Activated CD4-positive, alpha-beta T cell treated with anti-CD3 and anti-CD28 coated beads for 36 hours (primary cell): ENCODE measurements at regions of chr5 and their contacts with region 1.

Region 1: DNA sequence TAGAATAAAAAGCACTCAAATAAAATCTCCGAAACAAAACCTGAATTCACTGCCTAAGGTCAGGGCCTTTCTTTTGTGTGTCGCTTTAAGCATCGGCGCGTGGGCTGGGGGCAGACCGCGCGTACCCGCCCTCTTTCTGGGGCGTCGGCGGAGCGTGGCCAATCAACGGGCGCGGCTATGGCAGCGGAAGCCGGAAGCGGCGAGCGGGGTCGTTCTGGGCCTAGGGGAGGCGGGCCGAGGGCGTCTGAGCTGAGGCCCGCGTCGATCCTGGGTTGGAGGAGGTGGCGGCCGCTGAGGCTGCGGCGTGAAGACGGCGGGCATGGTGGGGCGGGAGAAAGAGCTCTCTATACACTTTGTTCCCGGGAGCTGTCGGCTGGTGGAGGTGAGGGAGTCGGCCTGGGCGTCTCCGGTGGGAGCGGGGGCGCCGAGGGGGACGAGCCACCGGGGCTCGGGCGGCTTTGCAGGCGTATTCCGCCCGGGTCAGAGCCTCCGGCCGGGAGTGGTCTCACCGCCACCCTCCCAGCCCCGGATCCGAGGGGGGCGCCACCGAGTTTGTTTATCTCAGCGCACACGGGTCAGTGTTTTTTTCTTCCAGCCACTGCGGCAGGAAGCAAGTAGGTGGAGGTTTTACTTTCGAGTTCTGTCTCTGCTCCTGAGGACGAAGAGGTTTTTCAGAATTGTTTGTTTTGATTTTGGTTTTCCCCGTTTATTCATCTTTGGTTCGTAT is at the start of gene MAT2B:
- DNase-seq: peak; percentile 98
- ATAC-seq: peak; percentile 81
- H3K4me3 Mint-ChIP-seq: peak within 1 kb of the TSS; percentile 81
- H3K27ac Mint-ChIP-seq: peak within 1 kb of the TSS; percentile 98
- H3K4me1 Mint-ChIP-seq: peaks cover 37% of the 10 kb centered on the region
- H3K27me3 Mint-ChIP-seq: no peaks in the 10 kb centered on the region
- total RNA-seq, gene MAT2B: 89.0 to 103 TPM

Region 2: GRCh38 chr5:161544350-161544765 is 1961.2 kb before region 1 on chr5:
- CTCF ChIA-PET with region 1: no interaction called
- POLR2A ChIA-PET with region 1: no interaction called
- intact Hi-C with region 1: loop called in 1 of 2 experiments (anchors 10 kb)
- DNase-seq: peak; percentile 56
- ATAC-seq: peak; percentile 42
- H3K4me3 Mint-ChIP-seq: no peak overlapping the region
- H3K27ac Mint-ChIP-seq: no peak overlapping the region
- H3K4me1 Mint-ChIP-seq: peaks cover 7% of the 10 kb centered on the region
- H3K27me3 Mint-ChIP-seq: peaks cover 58% of the 10 kb centered on the region

Region 3: GRCh38 chr5:163437309-163438182 is 68.0 kb before region 1 on chr5 and contains the start of gene CCNG1:
- CTCF ChIA-PET with region 1: interaction called, 4 read pairs
- POLR2A ChIA-PET with region 1: interaction called, 5 read pairs
- intact Hi-C with region 1: loop called (anchors 1 kb)
- DNase-seq: peak; percentile 93
- ATAC-seq: peak; percentile 96
- H3K4me3 Mint-ChIP-seq: peak within 1 kb of the TSS; percentile 83
- H3K27ac Mint-ChIP-seq: peak within 1 kb of the TSS; percentile 88
- H3K4me1 Mint-ChIP-seq: peaks cover 41% of the 10 kb centered on the region
- H3K27me3 Mint-ChIP-seq: no peaks in the 10 kb centered on the region
- total RNA-seq, gene CCNG1: 114 to 120 TPM

Region 4: GRCh38 chr5:163459922-163460766 is 45.4 kb before region 1 on chr5 and contains the starts of genes HMMR and NUDCD2:
- CTCF ChIA-PET with region 1: interaction called, 26 read pairs
- POLR2A ChIA-PET with region 1: interaction called, 121 read pairs
- intact Hi-C with region 1: loop called (anchors 1 kb)
- DNase-seq: peak; percentile 95
- ATAC-seq: peak; percentile 88
- H3K4me3 Mint-ChIP-seq: peak within 1 kb of the TSS; percentile 95
- H3K27ac Mint-ChIP-seq: peak within 1 kb of the TSS; percentile 100
- H3K4me1 Mint-ChIP-seq: peaks cover 36% of the 10 kb centered on the region
- H3K27me3 Mint-ChIP-seq: no peaks in the 10 kb centered on the region
- total RNA-seq, gene HMMR: 94.1 to 102 TPM
- total RNA-seq, gene NUDCD2: 37.8 to 51.3 TPM